ENCODE measurements at regions of chr2 and their contacts with region 1.

Region 1: DNA sequence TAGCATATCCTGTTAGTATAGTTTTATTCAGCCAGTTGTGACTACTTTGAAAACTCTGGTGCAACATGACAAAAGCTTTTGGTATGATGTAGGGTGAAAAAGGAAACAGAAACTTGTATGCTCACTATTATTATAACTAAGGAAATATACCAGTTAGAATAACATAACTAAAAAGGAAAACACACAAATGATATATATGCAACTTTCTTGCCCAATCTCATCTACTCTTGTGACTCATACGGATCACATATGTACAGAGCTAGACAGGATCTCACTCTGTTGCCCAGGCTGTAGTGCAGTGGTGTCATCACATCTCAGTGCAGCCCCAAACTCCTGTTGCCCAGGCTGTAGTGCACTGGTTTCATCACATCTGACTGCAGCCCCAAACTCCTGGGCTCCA is 12.4 kb upstream of the TLK1 start:
- DNase-seq: no peak
- ATAC-seq: no peak

Region 2: GRCh38 chr2:171018522-171018921 is 154.6 kb before region 1 on chr2:
- intact Hi-C with region 1: no loop called
- DNase-seq: no peak
- ATAC-seq: no peak

Region 3: GRCh38 chr2:171325886-171326585 is 152.9 kb after region 1 on chr2:
- intact Hi-C with region 1: no loop called
- DNase-seq: no peak
- ATAC-seq: no peak

Region 4: DNA sequence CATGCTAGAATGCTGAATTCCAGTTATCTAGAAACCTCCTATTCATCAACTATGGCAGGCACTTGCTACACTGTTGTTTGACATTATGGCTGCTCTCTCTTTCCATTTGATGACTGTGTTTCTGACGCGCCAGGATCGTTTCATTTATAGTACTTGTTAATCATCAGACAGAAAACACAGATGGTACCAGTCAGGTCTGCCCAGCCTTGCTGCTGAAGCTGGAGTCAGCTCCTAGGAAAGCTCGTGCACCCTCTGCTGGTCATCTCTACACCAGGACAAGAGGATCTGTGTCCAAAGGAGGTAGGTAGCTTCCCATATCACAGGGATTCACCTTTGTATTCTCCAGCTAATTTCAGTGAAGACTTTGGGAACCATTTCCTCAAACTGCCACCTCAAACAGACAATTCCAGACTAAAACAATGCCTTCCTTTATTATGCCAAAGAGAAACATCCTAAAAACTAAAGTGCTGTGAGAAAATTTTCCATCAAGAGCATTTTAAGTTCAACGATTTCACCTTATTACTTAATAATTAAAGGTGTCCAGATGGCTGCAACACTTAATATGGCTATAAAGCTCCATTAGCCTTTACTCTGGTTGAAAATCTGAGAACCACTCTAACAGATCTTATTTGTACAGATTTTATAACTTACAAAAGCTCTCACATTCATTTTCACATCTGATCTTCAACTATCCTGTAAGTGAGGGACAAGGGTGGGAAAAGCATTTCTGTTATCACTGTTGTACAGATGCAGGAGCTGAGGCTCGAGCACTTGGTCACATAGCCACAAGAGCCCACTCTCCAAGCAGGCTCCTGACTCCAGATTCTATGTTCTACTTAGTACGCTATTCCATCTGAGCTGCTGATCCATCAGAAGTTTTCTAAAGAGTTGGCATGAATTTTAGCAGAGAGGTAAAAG is 243.2 kb after region 1 on chr2:
- intact Hi-C with region 1: loop called in 1 of 2 experiments (anchors 10 kb)
- DNase-seq: peak; percentile 93 to 96
- ATAC-seq: peak; percentile 100

Measured in left colon (tissue), 2 donors.